Naive thymus-derived CD4-positive, alpha-beta T cell (primary cell): ENCODE measurements at regions of chr14 and their contacts with region 1.

Region 1: GRCh38 chr14:103562429-103563225 is at the starts of genes BAG5 and COA8:
- DNase-seq: peak; percentile 81 to 94 (median 88)
- ATAC-seq: peak; percentile 91
- H3K4me3 ChIP-seq: peak within 1 kb of the TSS; percentile 91
- H3K4me3 Mint-ChIP-seq: peak within 1 kb of the TSS; percentile 91 to 98 (median 94)
- H3K27ac ChIP-seq: peak within 1 kb of the TSS; percentile 87
- H3K27ac Mint-ChIP-seq: peak within 1 kb of the TSS; percentile 87 to 96 (median 92)
- H3K4me1 ChIP-seq: peaks cover 32 to 38% of the 10 kb centered on the region in 2 donors
- H3K4me1 Mint-ChIP-seq: peaks cover 47 to 73% (median 62%) of the 10 kb centered on the region in 7 donors
- H3K27me3 ChIP-seq: no peaks in the 10 kb centered on the region
- H3K27me3 Mint-ChIP-seq: no peaks in the 10 kb centered on the region
- total RNA-seq, gene BAG5: 29.9 to 38.9 (median 36.4) TPM
- total RNA-seq, gene COA8: 13.6 to 26.3 (median 24.1) TPM

Region 2: DNA sequence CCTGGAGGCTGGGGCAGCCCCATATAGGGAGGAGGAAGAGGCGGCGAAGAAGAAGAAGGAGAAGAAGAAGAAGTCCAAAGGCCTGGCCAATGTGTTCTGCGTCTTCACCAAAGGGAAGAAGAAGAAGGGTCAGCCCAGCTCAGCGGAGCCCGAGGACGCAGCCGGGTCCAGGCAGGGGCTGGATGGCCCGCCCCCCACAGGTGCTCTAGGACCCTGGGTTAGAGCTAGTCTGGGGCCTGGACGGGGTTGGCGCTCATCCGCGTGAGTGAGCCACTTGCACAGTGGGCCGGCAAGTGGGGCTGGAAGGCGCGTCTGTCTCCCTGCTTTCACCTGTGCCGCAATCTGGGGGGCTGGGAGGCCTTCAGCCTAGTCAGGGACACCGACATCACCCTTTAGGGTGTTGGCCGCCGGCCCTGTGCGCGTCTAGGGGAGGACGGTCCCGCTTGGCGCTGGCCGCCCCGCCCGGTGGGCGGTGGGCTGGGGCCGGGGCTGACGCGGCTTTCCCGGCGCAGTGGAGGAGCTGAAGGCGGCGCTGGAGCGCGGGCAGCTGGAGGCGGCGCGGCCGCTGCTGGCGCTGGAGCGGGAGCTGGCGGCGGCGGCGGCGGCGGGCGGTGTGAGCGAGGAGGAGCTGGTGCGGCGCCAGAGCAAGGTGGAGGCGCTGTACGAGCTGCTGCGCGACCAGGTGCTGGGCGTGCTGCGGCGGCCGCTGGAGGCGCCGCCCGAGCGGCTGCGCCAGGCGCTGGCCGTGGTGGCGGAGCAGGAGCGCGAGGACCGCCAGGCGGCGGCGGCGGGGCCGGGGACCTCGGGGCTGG is 435.9 kb before region 1 on chr14:
- CTCF ChIA-PET with region 1: no interaction called
- POLR2A ChIA-PET with region 1: no interaction called
- intact Hi-C with region 1: no loop called
- DNase-seq: no peak
- ATAC-seq: no peak
- H3K4me3 ChIP-seq: no peak overlapping the region
- H3K4me3 Mint-ChIP-seq: no peak overlapping the region
- H3K27ac ChIP-seq: no peak overlapping the region
- H3K27ac Mint-ChIP-seq: no peak overlapping the region
- H3K4me1 ChIP-seq: no peaks in the 10 kb centered on the region
- H3K4me1 Mint-ChIP-seq: peaks cover 0 to 4% (median 0%) of the 10 kb centered on the region in 7 donors
- H3K27me3 ChIP-seq: no peaks in the 10 kb centered on the region
- H3K27me3 Mint-ChIP-seq: peaks cover 5 to 17% (median 15%) of the 10 kb centered on the region in 5 donors

Region 3: DNA sequence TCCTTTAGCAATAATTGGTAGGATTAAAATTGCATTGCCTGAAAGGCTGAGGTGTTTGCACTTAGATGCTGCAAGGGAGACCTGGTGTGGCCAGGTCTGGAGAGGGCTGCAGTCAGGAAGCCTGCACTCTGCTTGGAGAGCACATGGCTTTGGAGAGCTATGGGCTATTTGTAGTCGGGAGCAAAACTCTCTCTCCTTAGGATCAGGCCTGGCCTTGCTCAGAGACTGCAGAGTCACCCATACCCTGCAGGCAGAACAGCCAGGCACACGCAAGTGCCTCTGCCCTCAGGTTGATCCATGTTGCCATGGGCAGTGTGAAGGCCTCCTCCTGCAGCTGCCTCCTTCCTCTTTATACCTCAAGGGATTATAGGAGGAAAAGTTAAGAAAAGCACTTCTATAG is 66.8 kb before region 1 on chr14:
- CTCF ChIA-PET with region 1: no interaction called
- POLR2A ChIA-PET with region 1: no interaction called
- intact Hi-C with region 1: no loop called
- DNase-seq: no peak
- ATAC-seq: no peak
- H3K4me3 ChIP-seq: no peak overlapping the region
- H3K4me3 Mint-ChIP-seq: no peak overlapping the region
- H3K27ac ChIP-seq: no peak overlapping the region
- H3K27ac Mint-ChIP-seq: peak overlapping the region in 1 of 9 donors; percentile 44
- H3K4me1 ChIP-seq: no peaks in the 10 kb centered on the region
- H3K4me1 Mint-ChIP-seq: peaks cover 7 to 11% (median 9%) of the 10 kb centered on the region in 7 donors
- H3K27me3 ChIP-seq: no peaks in the 10 kb centered on the region
- H3K27me3 Mint-ChIP-seq: no peaks in the 10 kb centered on the region

Region 4: GRCh38 chr14:103520657-103521437 is 41.8 kb before region 1 on chr14:
- CTCF ChIA-PET with region 1: interaction called, 6 read pairs
- POLR2A ChIA-PET with region 1: interaction called, 4 read pairs
- intact Hi-C with region 1: loop called in 1 of 2 experiments (anchors 1 kb)
- DNase-seq: peak; percentile 48 to 72 (median 60)
- ATAC-seq: peak; percentile 85
- H3K4me3 ChIP-seq: peak overlapping the region; percentile 37
- H3K4me3 Mint-ChIP-seq: peak overlapping the region; percentile 18 to 77 (median 64)
- H3K27ac ChIP-seq: no peak overlapping the region
- H3K27ac Mint-ChIP-seq: no peak overlapping the region
- H3K4me1 ChIP-seq: peaks cover 7 to 15% of the 10 kb centered on the region in 2 donors
- H3K4me1 Mint-ChIP-seq: peaks cover 0 to 21% (median 13%) of the 10 kb centered on the region in 7 donors
- H3K27me3 ChIP-seq: no peaks in the 10 kb centered on the region
- H3K27me3 Mint-ChIP-seq: peaks cover 0 to 33% (median 6%) of the 10 kb centered on the region in 5 donors

Region 5: DNA sequence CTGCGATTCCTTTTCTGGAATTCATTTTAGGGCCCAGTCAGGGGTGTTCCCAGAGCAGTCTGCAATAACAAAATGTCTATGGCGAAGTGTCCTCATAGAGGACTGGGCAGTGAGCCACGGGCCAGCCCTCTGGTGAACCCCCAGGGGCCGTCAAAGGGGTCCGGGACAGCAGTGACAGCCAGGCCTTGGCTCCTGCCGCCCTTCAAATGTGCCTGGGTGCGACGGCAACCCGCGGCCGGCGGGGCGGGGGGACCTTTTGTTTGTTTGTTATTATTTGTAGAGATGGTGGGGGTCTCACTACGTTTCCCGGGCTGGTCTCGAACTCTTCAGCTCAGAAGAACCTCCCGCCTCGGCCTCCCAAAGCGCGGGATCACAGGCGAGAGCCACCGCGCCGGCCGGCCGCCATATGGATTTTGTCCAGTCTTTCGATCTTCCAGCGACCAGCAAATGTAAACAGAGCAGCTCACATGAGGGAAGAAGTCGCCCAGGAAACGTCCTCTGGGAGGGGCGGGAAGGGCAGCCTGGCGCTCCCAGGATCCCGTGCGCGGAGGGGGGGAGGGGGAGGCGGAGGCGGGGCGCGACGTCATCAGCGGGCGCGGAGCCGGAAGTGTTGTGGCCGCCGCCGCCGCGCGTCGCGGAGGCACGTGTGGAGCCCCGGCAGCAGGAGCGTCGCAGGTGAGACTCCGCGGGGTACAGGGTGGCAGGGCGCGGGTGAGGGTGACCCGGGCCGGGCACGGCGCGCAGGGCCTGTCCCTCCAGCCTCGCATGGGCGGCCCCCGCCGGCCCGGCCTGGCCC is 33.8 kb before region 1 on chr14 and contains the start of gene TRMT61A:
- CTCF ChIA-PET with region 1: no interaction called
- POLR2A ChIA-PET with region 1: interaction called, 4 read pairs
- intact Hi-C with region 1: loop called (anchors 1 to 2 kb)
- DNase-seq: peak; percentile 58 to 80 (median 74)
- ATAC-seq: peak; percentile 85
- H3K4me3 ChIP-seq: peak within 1 kb of the TSS; percentile 96
- H3K4me3 Mint-ChIP-seq: peak within 1 kb of the TSS; percentile 89 to 97 (median 95)
- H3K27ac ChIP-seq: peak within 1 kb of the TSS; percentile 81
- H3K27ac Mint-ChIP-seq: peak within 1 kb of the TSS; percentile 91 to 98 (median 96)
- H3K4me1 ChIP-seq: peaks cover 19 to 21% of the 10 kb centered on the region in 2 donors
- H3K4me1 Mint-ChIP-seq: peaks cover 30 to 39% (median 35%) of the 10 kb centered on the region in 7 donors
- H3K27me3 ChIP-seq: no peaks in the 10 kb centered on the region
- H3K27me3 Mint-ChIP-seq: peaks cover 0 to 21% (median 1%) of the 10 kb centered on the region in 5 donors
- total RNA-seq, gene TRMT61A: 9.8 to 15.1 (median 14.1) TPM

Region 6: DNA sequence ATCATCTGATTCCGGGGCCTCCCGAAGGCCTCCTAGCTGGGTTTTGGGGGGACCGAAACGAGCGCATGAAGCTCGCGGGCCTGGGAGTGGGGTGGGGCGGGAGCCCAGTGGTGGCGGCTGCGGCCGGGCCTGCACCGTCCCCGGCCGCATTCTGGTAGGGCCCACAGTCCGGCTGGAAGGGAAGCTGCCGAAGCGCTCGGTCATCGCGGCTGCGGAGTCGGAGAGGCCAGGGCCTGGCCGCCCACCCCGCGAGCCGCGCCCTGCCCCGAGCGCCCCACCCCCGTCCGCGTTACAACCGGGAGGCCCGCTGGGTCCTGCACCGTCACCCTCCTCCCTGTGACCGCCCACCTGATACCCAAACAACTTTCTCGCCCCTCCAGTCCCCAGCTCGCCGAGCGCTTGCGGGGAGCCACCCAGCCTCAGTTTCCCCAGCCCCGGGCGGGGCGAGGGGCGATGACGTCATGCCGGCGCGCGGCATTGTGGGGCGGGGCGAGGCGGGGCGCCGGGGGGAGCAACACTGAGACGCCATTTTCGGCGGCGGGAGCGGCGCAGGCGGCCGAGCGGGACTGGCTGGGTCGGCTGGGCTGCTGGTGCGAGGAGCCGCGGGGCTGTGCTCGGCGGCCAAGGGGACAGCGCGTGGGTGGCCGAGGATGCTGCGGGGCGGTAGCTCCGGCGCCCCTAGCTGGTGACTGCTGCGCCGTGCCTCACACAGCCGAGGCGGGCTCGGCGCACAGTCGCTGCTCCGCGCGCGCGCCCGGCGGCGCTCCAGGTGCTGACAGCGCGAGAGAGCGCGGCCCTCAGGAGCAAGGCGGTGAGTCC is 66.3 kb after region 1 on chr14 and contains the start of gene KLC1:
- CTCF ChIA-PET with region 1: interaction called, 3 read pairs
- POLR2A ChIA-PET with region 1: interaction called, 4 read pairs
- intact Hi-C with region 1: loop called (anchors 2 to 5 kb)
- DNase-seq: peak; percentile 71 to 93 (median 84)
- ATAC-seq: peak; percentile 87
- H3K4me3 ChIP-seq: peak within 1 kb of the TSS; percentile 78
- H3K4me3 Mint-ChIP-seq: peak within 1 kb of the TSS; percentile 74 to 91 (median 88)
- H3K27ac ChIP-seq: peak within 1 kb of the TSS; percentile 98
- H3K27ac Mint-ChIP-seq: peak within 1 kb of the TSS; percentile 60 to 93 (median 88)
- H3K4me1 ChIP-seq: peaks cover 18 to 29% of the 10 kb centered on the region in 2 donors
- H3K4me1 Mint-ChIP-seq: peaks cover 23 to 64% (median 38%) of the 10 kb centered on the region in 7 donors
- H3K27me3 ChIP-seq: no peaks in the 10 kb centered on the region
- H3K27me3 Mint-ChIP-seq: no peaks in the 10 kb centered on the region
- total RNA-seq, gene KLC1: 150 to 268 (median 174) TPM